PC-9 (cell line): ENCODE measurements at regions of chrX and their contacts with region 1.

Region 1: DNA sequence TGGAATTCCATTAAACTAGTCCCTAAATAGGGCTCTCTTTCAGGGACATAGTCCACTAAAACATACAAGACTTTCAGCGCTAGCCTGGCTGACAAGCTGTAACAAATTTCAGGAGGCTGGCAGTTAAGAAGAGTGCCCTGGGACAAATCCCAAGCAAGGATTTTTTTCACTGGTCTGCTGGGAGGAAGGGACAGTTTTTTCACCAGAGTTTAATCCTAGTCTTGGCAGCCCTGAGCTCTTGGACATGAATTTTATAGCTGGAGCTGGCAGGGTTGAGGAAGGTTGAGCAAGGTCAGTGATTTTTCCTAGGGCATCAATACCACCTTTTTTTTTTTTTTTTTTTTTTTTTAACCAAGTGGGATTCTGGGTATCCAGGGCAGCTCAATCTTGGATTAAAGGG is 184.4 kb downstream of the SH2D1A start:
- DNase-seq: no peak
- H3K4me3 ChIP-seq: no peak overlapping the region
- H3K27ac ChIP-seq: no peak overlapping the region
- H3K4me1 ChIP-seq: no peaks in the 10 kb centered on the region
- H3K27me3 ChIP-seq: no peaks in the 10 kb centered on the region
- CTCF ChIP-seq: no peak

Region 2: DNA sequence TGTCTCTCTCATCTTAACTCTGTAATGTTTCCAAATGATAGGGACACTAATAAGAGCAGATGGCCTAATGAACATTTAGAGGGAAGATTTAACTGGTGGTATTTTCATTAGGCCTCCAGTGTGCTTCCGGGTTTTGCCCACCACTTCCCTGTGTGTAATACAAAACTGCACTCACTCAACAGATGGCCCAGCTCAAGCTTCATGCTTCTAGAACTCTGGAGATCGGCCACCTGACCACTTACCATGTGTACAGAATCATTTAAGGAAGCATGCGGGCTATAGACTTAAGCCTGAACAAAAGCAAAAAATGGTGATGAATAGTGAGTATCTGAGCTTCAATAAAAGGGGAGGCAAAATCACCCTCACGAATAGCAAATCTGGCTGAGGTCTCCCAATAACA is 95.2 kb before region 1 on chrX:
- CTCF ChIA-PET with region 1: no interaction called
- POLR2A ChIA-PET with region 1: no interaction called
- intact Hi-C with region 1: no loop called
- DNase-seq: no peak
- H3K4me3 ChIP-seq: no peak overlapping the region
- H3K27ac ChIP-seq: no peak overlapping the region
- H3K4me1 ChIP-seq: no peaks in the 10 kb centered on the region
- H3K27me3 ChIP-seq: no peaks in the 10 kb centered on the region
- CTCF ChIP-seq: no peak

Region 3: DNA sequence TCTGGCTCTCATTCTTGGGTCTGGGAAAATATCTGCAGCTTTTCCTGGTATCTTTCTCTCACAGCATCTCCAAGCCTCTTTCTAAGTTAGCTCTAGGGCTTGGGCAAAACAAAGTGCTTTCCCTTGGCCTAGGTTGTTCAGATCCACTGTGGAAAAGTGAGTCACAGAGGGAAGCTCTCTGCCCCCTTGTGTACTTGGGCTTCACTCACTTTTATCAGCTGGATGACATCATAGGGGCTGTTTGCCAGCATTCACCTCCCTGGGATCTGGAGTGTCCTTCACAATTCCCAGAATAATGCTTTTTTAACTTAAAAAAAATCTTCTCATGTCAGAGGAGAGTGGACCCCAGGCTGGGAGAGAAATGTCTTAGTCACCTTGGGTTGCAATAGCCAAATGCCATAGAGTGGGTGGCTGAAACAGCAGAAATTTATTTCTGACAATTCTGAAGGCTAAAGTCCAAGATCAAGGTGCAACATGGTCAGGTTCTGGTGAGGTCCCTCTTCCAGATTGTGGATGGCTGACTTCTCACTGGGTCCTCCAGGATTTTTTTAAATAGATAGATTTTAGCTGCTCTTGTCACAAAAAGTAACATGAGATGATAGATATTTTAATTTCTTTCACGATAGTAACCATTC is 63.3 kb after region 1 on chrX:
- CTCF ChIA-PET with region 1: no interaction called
- POLR2A ChIA-PET with region 1: no interaction called
- intact Hi-C with region 1: no loop called
- DNase-seq: no peak
- H3K4me3 ChIP-seq: no peak overlapping the region
- H3K27ac ChIP-seq: no peak overlapping the region
- H3K4me1 ChIP-seq: no peaks in the 10 kb centered on the region
- H3K27me3 ChIP-seq: no peaks in the 10 kb centered on the region
- CTCF ChIP-seq: no peak

Region 4: DNA sequence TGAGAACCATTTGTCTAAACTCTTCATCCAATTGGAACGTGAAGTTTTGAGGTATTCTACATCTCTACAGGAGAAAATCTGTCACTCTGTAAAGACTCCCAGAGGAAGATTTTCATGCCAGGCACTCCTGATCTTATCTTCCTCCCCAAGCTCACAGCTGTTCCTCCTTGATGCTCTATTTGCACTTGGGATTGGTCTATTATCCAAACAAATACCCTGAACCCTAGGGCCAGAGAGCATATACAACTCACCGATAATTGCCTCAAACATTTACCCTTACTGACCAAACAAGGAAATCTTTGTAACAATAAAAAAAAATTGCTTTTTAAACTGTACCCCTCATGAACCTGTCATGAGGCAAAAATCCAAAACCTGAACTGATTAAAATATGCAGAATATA is 188.3 kb after region 1 on chrX:
- CTCF ChIA-PET with region 1: interaction called, 10 read pairs
- POLR2A ChIA-PET with region 1: no interaction called
- intact Hi-C with region 1: no loop called
- DNase-seq: no peak
- H3K4me3 ChIP-seq: no peak overlapping the region
- H3K27ac ChIP-seq: no peak overlapping the region
- H3K4me1 ChIP-seq: no peaks in the 10 kb centered on the region
- H3K27me3 ChIP-seq: no peaks in the 10 kb centered on the region
- CTCF ChIP-seq: no peak